B cell (primary cell): ENCODE measurements at regions of chr3 and their contacts with region 1.

Region 1: GRCh38 chr3:19866751-19867347 is 67.2 kb downstream of the EFHB start:
- DNase-seq: peak; percentile 74
- ATAC-seq: peak; percentile 71
- H3K4me3 ChIP-seq: no peak overlapping the region
- H3K4me3 Mint-ChIP-seq: no peak overlapping the region
- H3K27ac ChIP-seq: no peak overlapping the region
- H3K27ac Mint-ChIP-seq: no peak overlapping the region
- H3K4me1 ChIP-seq: peaks cover 0 to 3% of the 10 kb centered on the region in 2 donors
- H3K4me1 Mint-ChIP-seq: peaks cover 2% of the 10 kb centered on the region
- H3K27me3 ChIP-seq: no peaks in the 10 kb centered on the region
- H3K27me3 Mint-ChIP-seq: peaks cover 8% of the 10 kb centered on the region
- CTCF ChIP-seq: peak; percentile 93

Region 2: DNA sequence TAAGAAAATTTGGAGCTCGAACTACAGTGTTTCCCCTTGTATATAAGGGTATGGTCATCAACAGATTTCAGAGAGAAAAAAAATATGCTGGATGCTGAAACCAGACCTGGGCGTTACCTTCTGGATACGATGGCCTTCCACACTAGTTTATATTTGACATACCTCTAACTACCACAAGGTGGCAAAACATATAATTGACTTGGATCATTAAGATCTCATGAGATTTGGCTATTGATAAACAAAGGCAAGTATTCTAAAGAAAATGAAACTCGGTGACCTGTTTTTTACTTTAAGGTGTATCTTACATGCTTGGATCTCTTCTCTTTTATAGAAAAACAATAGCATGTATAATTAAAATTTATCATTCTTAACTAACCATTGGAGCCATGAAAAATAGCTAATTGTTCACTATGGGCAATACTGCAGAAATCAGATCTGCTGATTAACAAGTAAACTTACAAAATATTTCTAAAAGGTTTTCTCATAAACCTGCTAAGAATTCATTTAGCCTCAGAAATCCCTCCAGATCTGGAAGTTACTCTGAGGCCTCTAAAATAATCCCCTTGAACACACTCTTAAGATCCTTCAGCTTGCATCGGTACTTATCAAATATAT is 1019.2 kb before region 1 on chr3:
- CTCF ChIA-PET with region 1: interaction called, 14 read pairs
- POLR2A ChIA-PET with region 1: no interaction called
- intact Hi-C with region 1: no loop called
- DNase-seq: peak; percentile 17
- ATAC-seq: no peak
- H3K4me3 ChIP-seq: no peak overlapping the region
- H3K4me3 Mint-ChIP-seq: no peak overlapping the region
- H3K27ac ChIP-seq: no peak overlapping the region
- H3K27ac Mint-ChIP-seq: no peak overlapping the region
- H3K4me1 ChIP-seq: peaks cover 0 to 5% of the 10 kb centered on the region in 2 donors
- H3K4me1 Mint-ChIP-seq: peaks cover 9% of the 10 kb centered on the region
- H3K27me3 ChIP-seq: no peaks in the 10 kb centered on the region
- H3K27me3 Mint-ChIP-seq: peaks cover 4% of the 10 kb centered on the region
- CTCF ChIP-seq: peak; percentile 53

Region 3: GRCh38 chr3:19065027-19065426 is 801.8 kb before region 1 on chr3:
- CTCF ChIA-PET with region 1: interaction called, 27 read pairs
- POLR2A ChIA-PET with region 1: no interaction called
- intact Hi-C with region 1: no loop called
- DNase-seq: peak; percentile 33
- ATAC-seq: no peak
- H3K4me3 ChIP-seq: no peak overlapping the region
- H3K4me3 Mint-ChIP-seq: no peak overlapping the region
- H3K27ac ChIP-seq: no peak overlapping the region
- H3K27ac Mint-ChIP-seq: no peak overlapping the region
- H3K4me1 ChIP-seq: no peaks in the 10 kb centered on the region
- H3K4me1 Mint-ChIP-seq: no peaks in the 10 kb centered on the region
- H3K27me3 ChIP-seq: no peaks in the 10 kb centered on the region
- H3K27me3 Mint-ChIP-seq: peaks cover 5% of the 10 kb centered on the region
- CTCF ChIP-seq: peak; percentile 70

Region 4: GRCh38 chr3:19213601-19214220 is 653.1 kb before region 1 on chr3:
- CTCF ChIA-PET with region 1: interaction called, 25 read pairs
- POLR2A ChIA-PET with region 1: no interaction called
- intact Hi-C with region 1: loop called (anchors 1 kb)
- DNase-seq: peak; percentile 67
- ATAC-seq: peak; percentile 69
- H3K4me3 ChIP-seq: no peak overlapping the region
- H3K4me3 Mint-ChIP-seq: no peak overlapping the region
- H3K27ac ChIP-seq: no peak overlapping the region
- H3K27ac Mint-ChIP-seq: no peak overlapping the region
- H3K4me1 ChIP-seq: peaks cover 0 to 7% of the 10 kb centered on the region in 2 donors
- H3K4me1 Mint-ChIP-seq: peaks cover 4% of the 10 kb centered on the region
- H3K27me3 ChIP-seq: no peaks in the 10 kb centered on the region
- H3K27me3 Mint-ChIP-seq: no peaks in the 10 kb centered on the region
- CTCF ChIP-seq: peak; percentile 58

Region 5: GRCh38 chr3:19702416-19703078 is 164.3 kb before region 1 on chr3:
- CTCF ChIA-PET with region 1: no interaction called
- POLR2A ChIA-PET with region 1: no interaction called
- intact Hi-C with region 1: no loop called
- DNase-seq: no peak
- ATAC-seq: peak; percentile 49
- H3K4me3 ChIP-seq: peak overlapping the region in 1 of 5 experiments; percentile 27
- H3K4me3 Mint-ChIP-seq: peak overlapping the region; percentile 42
- H3K27ac ChIP-seq: no peak overlapping the region
- H3K27ac Mint-ChIP-seq: no peak overlapping the region
- H3K4me1 ChIP-seq: peaks cover 0 to 5% of the 10 kb centered on the region in 2 donors
- H3K4me1 Mint-ChIP-seq: no peaks in the 10 kb centered on the region
- H3K27me3 ChIP-seq: peaks cover 0 to 3% (median 0%) of the 10 kb centered on the region in 4 experiments
- H3K27me3 Mint-ChIP-seq: no peaks in the 10 kb centered on the region
- CTCF ChIP-seq: no peak

Region 6: GRCh38 chr3:19877656-19878055 is 10.8 kb after region 1 on chr3:
- CTCF ChIA-PET with region 1: interaction called, 18 read pairs
- POLR2A ChIA-PET with region 1: no interaction called
- intact Hi-C with region 1: no loop called
- DNase-seq: no peak
- ATAC-seq: no peak
- H3K4me3 ChIP-seq: no peak overlapping the region
- H3K4me3 Mint-ChIP-seq: no peak overlapping the region
- H3K27ac ChIP-seq: no peak overlapping the region
- H3K27ac Mint-ChIP-seq: no peak overlapping the region
- H3K4me1 ChIP-seq: no peaks in the 10 kb centered on the region
- H3K4me1 Mint-ChIP-seq: no peaks in the 10 kb centered on the region
- H3K27me3 ChIP-seq: no peaks in the 10 kb centered on the region
- H3K27me3 Mint-ChIP-seq: no peaks in the 10 kb centered on the region
- CTCF ChIP-seq: no peak